ENCODE measurements at regions of chr6 and their contacts with region 1.

Region 1: GRCh38 chr6:43516697-43517504 is at the starts of genes POLR1C and YIPF3:
- DNase-seq: peak; percentile 90 to 98 (median 97)
- ATAC-seq: peak; percentile 96
- H3K4me3 ChIP-seq: peak within 1 kb of the TSS; percentile 91 to 98
- H3K4me3 Mint-ChIP-seq: no peak within 1 kb of the TSS
- H3K27ac ChIP-seq: peak within 1 kb of the TSS; percentile 83 to 94
- H3K27ac Mint-ChIP-seq: no peak within 1 kb of the TSS
- H3K4me1 ChIP-seq: peaks cover 34% of the 10 kb centered on the region
- H3K4me1 Mint-ChIP-seq: peaks cover 33% of the 10 kb centered on the region
- H3K27me3 ChIP-seq: no peaks in the 10 kb centered on the region
- H3K27me3 Mint-ChIP-seq: no peaks in the 10 kb centered on the region
- CTCF ChIP-seq: no peak
- total RNA-seq, gene POLR1C: 73.9 to 74.0 TPM
- total RNA-seq, gene YIPF3: 51.0 to 52.5 TPM

Region 2: GRCh38 chr6:42928986-42929820 is 587.7 kb before region 1 on chr6 and contains the start of gene CNPY3:
- CTCF ChIA-PET with region 1: no interaction called
- POLR2A ChIA-PET with region 1: interaction called, 9 read pairs
- intact Hi-C with region 1: loop called (anchors 1 to 2 kb)
- DNase-seq: peak; percentile 91 to 98 (median 94)
- ATAC-seq: peak; percentile 77
- H3K4me3 ChIP-seq: peak within 1 kb of the TSS; percentile 70 to 82
- H3K4me3 Mint-ChIP-seq: peak within 1 kb of the TSS; percentile 99
- H3K27ac ChIP-seq: peak within 1 kb of the TSS; percentile 93 to 95
- H3K27ac Mint-ChIP-seq: peak within 1 kb of the TSS; percentile 98
- H3K4me1 ChIP-seq: peaks cover 43% of the 10 kb centered on the region
- H3K4me1 Mint-ChIP-seq: peaks cover 45% of the 10 kb centered on the region
- H3K27me3 ChIP-seq: no peaks in the 10 kb centered on the region
- H3K27me3 Mint-ChIP-seq: no peaks in the 10 kb centered on the region
- CTCF ChIP-seq: no peak
- total RNA-seq, gene CNPY3: 43.9 to 47.4 TPM

Region 3: DNA sequence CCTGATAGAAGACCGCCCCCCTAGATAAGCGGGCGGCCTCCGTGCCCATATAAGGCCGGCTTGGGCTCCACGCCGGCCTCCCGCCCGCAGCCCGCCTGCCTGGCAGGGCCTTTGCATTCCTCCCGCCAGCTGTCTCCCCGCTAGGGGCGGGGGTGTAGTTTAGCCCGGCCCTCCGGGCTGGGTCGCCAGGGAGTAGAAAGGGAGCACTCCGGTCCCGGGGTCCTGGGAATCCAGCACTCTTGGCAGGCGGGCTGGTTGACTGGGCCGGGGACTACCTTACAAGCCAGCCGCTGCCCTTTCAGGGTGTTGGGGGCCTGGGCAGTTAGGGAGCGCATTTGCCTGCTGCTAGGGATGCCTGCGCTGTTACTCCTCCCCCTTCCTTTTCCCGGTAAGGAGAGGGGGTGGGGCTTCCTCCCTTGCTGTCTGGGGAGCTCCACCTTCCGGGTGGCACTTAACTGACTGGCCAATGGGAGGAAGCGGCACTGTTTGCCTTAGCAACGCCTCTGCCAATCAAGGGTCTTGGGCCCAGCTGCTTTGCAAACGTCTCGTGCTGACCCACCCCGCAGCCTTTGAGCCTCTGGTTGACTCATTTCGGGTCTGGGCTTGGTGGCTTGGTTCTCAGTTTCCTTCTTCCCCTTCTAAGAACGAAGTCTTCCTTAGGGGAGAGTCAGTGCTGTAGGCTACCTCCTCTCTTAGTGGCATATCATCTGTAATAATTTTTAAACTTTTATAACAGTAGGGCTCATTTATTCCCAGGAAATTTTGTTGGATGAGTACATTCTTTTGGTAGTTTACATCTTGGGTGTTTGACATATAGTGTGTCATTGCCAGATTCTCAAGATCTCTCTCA is 342.4 kb before region 1 on chr6:
- CTCF ChIA-PET with region 1: no interaction called
- POLR2A ChIA-PET with region 1: no interaction called
- intact Hi-C with region 1: loop called (anchors 2 to 5 kb)
- DNase-seq: peak; percentile 77 to 98 (median 92)
- ATAC-seq: peak; percentile 52
- H3K4me3 ChIP-seq: peak overlapping the region; percentile 4 to 50
- H3K4me3 Mint-ChIP-seq: peak overlapping the region; percentile 63
- H3K27ac ChIP-seq: peak overlapping the region; percentile 62 to 89
- H3K27ac Mint-ChIP-seq: peak overlapping the region; percentile 95
- H3K4me1 ChIP-seq: peaks cover 40% of the 10 kb centered on the region
- H3K4me1 Mint-ChIP-seq: peaks cover 45% of the 10 kb centered on the region
- H3K27me3 ChIP-seq: no peaks in the 10 kb centered on the region
- H3K27me3 Mint-ChIP-seq: no peaks in the 10 kb centered on the region
- CTCF ChIP-seq: no peak

Region 4: GRCh38 chr6:43427406-43428111 is 89.3 kb before region 1 on chr6 and contains the start of gene ABCC10:
- CTCF ChIA-PET with region 1: no interaction called
- POLR2A ChIA-PET with region 1: interaction called, 5 read pairs
- intact Hi-C with region 1: loop called in 1 of 2 experiments (anchors 1 kb)
- DNase-seq: peak; percentile 89 to 98 (median 94)
- ATAC-seq: peak; percentile 94
- H3K4me3 ChIP-seq: peak within 1 kb of the TSS; percentile 78 to 91
- H3K4me3 Mint-ChIP-seq: peak within 1 kb of the TSS; percentile 94
- H3K27ac ChIP-seq: peak within 1 kb of the TSS; percentile 80 to 84
- H3K27ac Mint-ChIP-seq: peak within 1 kb of the TSS; percentile 98
- H3K4me1 ChIP-seq: peaks cover 11% of the 10 kb centered on the region
- H3K4me1 Mint-ChIP-seq: peaks cover 30% of the 10 kb centered on the region
- H3K27me3 ChIP-seq: no peaks in the 10 kb centered on the region
- H3K27me3 Mint-ChIP-seq: no peaks in the 10 kb centered on the region
- CTCF ChIP-seq: no peak
- total RNA-seq, gene ABCC10: 39.7 to 45.5 TPM

Region 5: GRCh38 chr6:43491750-43492661 is 24.9 kb before region 1 on chr6:
- CTCF ChIA-PET with region 1: no interaction called
- POLR2A ChIA-PET with region 1: no interaction called
- intact Hi-C with region 1: no loop called
- DNase-seq: no peak
- ATAC-seq: no peak
- H3K4me3 ChIP-seq: no peak overlapping the region
- H3K4me3 Mint-ChIP-seq: no peak overlapping the region
- H3K27ac ChIP-seq: no peak overlapping the region
- H3K27ac Mint-ChIP-seq: no peak overlapping the region
- H3K4me1 ChIP-seq: peaks cover 15% of the 10 kb centered on the region
- H3K4me1 Mint-ChIP-seq: peaks cover 33% of the 10 kb centered on the region
- H3K27me3 ChIP-seq: no peaks in the 10 kb centered on the region
- H3K27me3 Mint-ChIP-seq: no peaks in the 10 kb centered on the region
- CTCF ChIP-seq: no peak

Region 6: DNA sequence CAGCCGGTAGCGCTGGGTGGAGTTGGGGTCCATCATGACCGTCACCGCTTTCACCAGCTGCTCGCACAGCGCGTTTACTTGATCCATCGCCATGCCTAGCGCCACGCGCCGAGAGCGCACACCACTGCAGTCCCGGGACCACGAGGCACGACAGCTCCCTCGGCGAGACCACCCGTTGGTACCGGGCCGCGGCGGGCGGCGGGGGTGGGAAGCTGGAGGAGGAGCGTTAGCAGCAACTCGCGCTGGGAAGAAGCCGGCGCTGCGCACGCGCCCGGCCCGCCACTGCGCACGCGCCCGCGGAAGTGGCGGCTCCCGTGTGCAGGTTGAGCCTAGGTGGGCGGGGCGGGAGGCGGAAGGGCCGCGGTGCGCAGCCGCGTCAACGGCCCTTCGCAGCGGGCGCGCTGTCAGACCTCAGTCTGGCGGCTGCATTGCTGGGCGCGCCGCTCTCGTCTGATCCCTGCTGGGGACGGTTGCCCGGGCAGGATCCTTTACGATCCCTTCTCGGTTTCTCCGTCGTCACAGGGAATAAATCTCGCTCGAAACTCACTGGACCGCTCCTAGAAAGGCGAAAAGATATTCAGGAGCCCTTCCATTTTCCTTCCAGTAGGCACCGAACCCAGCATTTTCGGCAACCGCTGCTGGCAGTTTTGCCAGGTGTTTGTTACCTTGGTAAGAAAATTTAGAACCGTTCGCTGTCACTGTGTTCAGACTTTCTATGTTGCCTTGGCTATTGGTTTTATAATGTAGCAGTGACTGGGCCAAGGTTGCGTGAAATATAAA is 59.1 kb after region 1 on chr6 and contains the starts of genes POLH and XPO5:
- CTCF ChIA-PET with region 1: no interaction called
- POLR2A ChIA-PET with region 1: no interaction called
- intact Hi-C with region 1: loop called (anchors 1 kb)
- DNase-seq: peak; percentile 80 to 97 (median 90)
- ATAC-seq: peak; percentile 96
- H3K4me3 ChIP-seq: peak within 1 kb of the TSS; percentile 78 to 89
- H3K4me3 Mint-ChIP-seq: peak within 1 kb of the TSS; percentile 95
- H3K27ac ChIP-seq: peak within 1 kb of the TSS; percentile 55 to 66
- H3K27ac Mint-ChIP-seq: peak within 1 kb of the TSS; percentile 93
- H3K4me1 ChIP-seq: peaks cover 20% of the 10 kb centered on the region
- H3K4me1 Mint-ChIP-seq: peaks cover 36% of the 10 kb centered on the region
- H3K27me3 ChIP-seq: no peaks in the 10 kb centered on the region
- H3K27me3 Mint-ChIP-seq: no peaks in the 10 kb centered on the region
- CTCF ChIP-seq: no peak
- total RNA-seq, gene POLH: 3.4 to 3.7 TPM
- total RNA-seq, gene XPO5: 29.6 to 39.9 TPM

Region 7: GRCh38 chr6:44387346-44388133 is 870.6 kb after region 1 on chr6 and contains the start of gene CDC5L:
- CTCF ChIA-PET with region 1: no interaction called
- POLR2A ChIA-PET with region 1: no interaction called
- intact Hi-C with region 1: loop called in 1 of 2 experiments (anchors 2 kb)
- DNase-seq: peak; percentile 78 to 99 (median 89)
- ATAC-seq: peak; percentile 83
- H3K4me3 ChIP-seq: peak within 1 kb of the TSS; percentile 67 to 96
- H3K4me3 Mint-ChIP-seq: peak within 1 kb of the TSS; percentile 98
- H3K27ac ChIP-seq: peak within 1 kb of the TSS; percentile 73 to 96
- H3K27ac Mint-ChIP-seq: peak within 1 kb of the TSS; percentile 98
- H3K4me1 ChIP-seq: peaks cover 24% of the 10 kb centered on the region
- H3K4me1 Mint-ChIP-seq: peaks cover 42% of the 10 kb centered on the region
- H3K27me3 ChIP-seq: no peaks in the 10 kb centered on the region
- H3K27me3 Mint-ChIP-seq: no peaks in the 10 kb centered on the region
- CTCF ChIP-seq: no peak
- total RNA-seq, gene CDC5L: 24.1 to 24.4 TPM